Dorsolateral prefrontal cortex (tissue), 120 donors: ENCODE measurements at regions of chr2 and their contacts with region 1.

Region 1: GRCh38 chr2:127810619-127811396 is at the start of gene WDR33:
- DNase-seq: peak; percentile 70 to 93 (median 86)
- H3K4me3 ChIP-seq: peak within 1 kb of the TSS; percentile 55 to 98 (median 88)
- H3K27ac ChIP-seq: peak within 1 kb of the TSS in 58 of 59 donors; percentile 44 to 96 (median 84)
- H3K27me3 ChIP-seq: no peaks in the 10 kb centered on the region
- CTCF ChIP-seq: peak in 20 of 56 donors; percentile 5 to 48 (median 20)
- total RNA-seq, gene WDR33: 42.2 to 70.5 (median 56.0) TPM

Region 2: GRCh38 chr2:127857265-127857808 is 46.5 kb after region 1 on chr2:
- intact Hi-C with region 1: loop called in 1 of 2 experiments (anchors 2 kb)
- DNase-seq: no peak
- H3K4me3 ChIP-seq: peak overlapping the region; percentile 63 to 99 (median 94)
- H3K27ac ChIP-seq: peak overlapping the region in 51 of 59 donors; percentile 1 to 90 (median 76)
- H3K27me3 ChIP-seq: no peaks in the 10 kb centered on the region
- CTCF ChIP-seq: no peak

Region 3: DNA sequence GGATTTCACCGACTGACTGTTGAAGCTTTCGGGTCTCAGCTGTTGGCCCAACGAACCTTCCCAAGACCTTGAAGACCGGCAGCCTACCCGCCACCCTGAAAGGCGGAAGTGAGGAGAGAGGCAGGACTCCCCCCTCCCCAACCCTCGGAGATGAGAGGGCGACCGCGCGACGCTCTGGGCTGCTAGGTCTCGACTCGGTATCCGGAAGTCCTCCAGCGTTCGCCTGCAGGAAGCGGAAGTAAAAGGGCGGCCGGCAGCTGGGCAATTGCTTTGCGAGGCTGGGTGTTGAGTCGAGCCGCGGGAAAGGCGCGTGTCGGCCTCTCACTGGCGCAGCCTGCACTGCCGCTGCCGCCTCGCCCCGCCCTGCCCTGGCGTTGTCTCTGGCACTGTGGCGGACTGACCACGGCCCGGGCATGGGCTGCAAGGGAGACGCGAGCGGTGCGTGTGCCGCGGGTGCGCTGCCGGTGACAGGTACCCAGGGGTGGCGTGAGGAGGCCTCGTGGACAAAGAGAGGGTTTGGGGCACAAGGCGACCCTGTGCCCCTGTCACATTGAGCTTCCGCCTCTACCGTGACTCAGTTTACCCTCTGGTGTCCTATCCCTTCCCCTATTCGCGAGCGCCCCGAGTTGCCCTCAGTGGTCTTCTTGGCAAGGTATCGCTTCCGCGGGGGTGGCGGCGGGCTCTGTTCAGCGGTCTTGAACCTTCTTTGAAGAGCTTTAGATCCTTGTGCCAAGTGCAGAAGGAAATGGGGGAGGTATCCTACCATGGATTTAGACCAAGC is 280.3 kb after region 1 on chr2 and contains the start of gene UGGT1:
- intact Hi-C with region 1: no loop called
- DNase-seq: peak; percentile 89 to 97 (median 94)
- H3K4me3 ChIP-seq: peak within 1 kb of the TSS; percentile 60 to 100 (median 94)
- H3K27ac ChIP-seq: peak within 1 kb of the TSS; percentile 13 to 93 (median 80)
- H3K27me3 ChIP-seq: no peaks in the 10 kb centered on the region
- CTCF ChIP-seq: peak in 38 of 56 donors; percentile 9 to 57 (median 34)
- total RNA-seq, gene UGGT1: 23.5 to 46.5 (median 33.1) TPM